Activated CD4-positive, alpha-beta T cell treated with anti-CD3 and anti-CD28 coated beads for 36 hours (primary cell): ENCODE measurements at regions of chr18 and their contacts with region 1.

Region 1: DNA sequence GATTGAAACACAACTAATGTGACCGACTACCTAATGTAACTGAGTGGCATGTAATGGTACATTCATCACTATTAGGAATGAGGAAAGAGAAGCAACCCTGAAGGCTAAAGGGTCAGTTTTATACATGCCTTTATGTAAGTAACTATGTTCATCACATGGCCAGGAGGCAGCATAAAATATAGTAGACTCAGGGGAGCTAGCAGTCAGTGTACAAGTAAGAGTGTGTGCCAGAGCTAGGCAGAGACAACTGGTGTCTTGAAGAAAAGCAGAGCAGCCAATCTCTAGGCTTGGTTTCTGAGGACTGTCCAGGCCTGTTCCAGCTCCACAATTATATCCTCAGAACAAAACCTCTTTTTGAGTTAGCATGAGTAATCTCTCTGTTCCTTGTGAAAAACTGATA is 18.1 kb downstream of the SMAD2 start:
- DNase-seq: peak; percentile 49
- ATAC-seq: peak; percentile 85
- H3K4me3 Mint-ChIP-seq: peak overlapping the region; percentile 44
- H3K27ac Mint-ChIP-seq: peak overlapping the region; percentile 94
- H3K4me1 Mint-ChIP-seq: peaks cover 96% of the 10 kb centered on the region
- H3K27me3 Mint-ChIP-seq: no peaks in the 10 kb centered on the region

Region 2: DNA sequence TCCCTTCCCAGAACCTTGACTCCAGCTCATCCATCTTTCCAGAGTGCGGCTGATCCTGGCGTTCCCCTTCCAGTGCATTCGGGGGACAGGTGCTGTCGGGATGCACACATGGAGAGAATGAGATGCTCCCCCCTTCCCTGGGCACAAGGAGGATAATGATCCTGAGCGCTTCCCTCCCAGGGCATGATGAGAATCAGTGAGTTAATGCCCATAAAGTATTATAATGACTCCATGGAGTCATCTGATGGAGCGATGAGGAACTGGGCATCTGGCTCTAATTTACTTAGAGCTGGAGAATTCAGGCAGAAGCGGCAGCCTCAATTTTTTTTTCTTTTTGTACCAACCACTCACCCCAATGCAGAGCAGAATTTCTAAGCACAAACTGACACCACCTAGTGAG is 581.3 kb before region 1 on chr18:
- CTCF ChIA-PET with region 1: no interaction called
- POLR2A ChIA-PET with region 1: no interaction called
- intact Hi-C with region 1: no loop called
- DNase-seq: no peak
- ATAC-seq: no peak
- H3K4me3 Mint-ChIP-seq: no peak overlapping the region
- H3K27ac Mint-ChIP-seq: no peak overlapping the region
- H3K4me1 Mint-ChIP-seq: no peaks in the 10 kb centered on the region
- H3K27me3 Mint-ChIP-seq: peaks cover 8% of the 10 kb centered on the region

Region 3: GRCh38 chr18:47901624-47902362 is 10.6 kb before region 1 on chr18:
- CTCF ChIA-PET with region 1: interaction called, 3 read pairs
- POLR2A ChIA-PET with region 1: interaction called, 4 read pairs
- intact Hi-C with region 1: loop called in 1 of 2 experiments (anchors 1 kb)
- DNase-seq: no peak
- ATAC-seq: peak; percentile 84
- H3K4me3 Mint-ChIP-seq: peak overlapping the region; percentile 55
- H3K27ac Mint-ChIP-seq: peak overlapping the region; percentile 95
- H3K4me1 Mint-ChIP-seq: peaks cover 88% of the 10 kb centered on the region
- H3K27me3 Mint-ChIP-seq: no peaks in the 10 kb centered on the region

Region 4: DNA sequence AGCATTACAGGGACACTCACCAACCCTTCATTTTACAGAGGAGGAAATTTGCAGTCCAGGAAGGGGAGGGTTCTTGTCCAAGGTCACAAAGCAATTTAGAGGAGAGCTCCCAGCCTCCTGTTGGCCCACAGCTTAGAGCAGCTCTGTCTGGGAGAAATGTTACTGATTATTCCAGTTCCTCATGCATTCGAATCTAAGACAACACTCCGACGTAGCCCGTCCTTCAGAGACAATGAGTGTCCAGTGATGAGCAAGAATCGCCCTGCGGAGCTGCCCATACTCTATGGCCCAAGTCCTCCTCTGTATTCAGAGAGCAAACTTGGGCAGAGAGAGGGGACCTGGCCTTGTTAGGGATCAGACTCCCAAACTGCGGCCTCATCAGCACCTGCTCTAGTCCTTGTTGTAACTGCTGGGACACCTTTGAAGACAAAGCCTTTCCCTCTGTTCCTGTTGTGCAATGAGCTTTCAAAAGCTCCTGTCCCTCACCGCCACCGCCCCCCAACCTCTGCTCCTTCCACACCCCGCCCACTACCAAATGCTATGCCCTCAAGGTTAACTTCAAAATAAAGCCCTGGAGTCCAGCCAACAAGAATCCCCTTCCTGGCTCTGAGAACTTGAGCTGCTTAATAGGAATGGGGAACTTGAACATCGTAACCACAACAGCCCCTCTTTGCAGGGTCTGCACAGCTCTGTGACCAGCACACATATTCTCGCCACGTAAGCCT is 252.9 kb after region 1 on chr18:
- CTCF ChIA-PET with region 1: no interaction called
- POLR2A ChIA-PET with region 1: no interaction called
- intact Hi-C with region 1: no loop called
- DNase-seq: no peak
- ATAC-seq: no peak
- H3K4me3 Mint-ChIP-seq: no peak overlapping the region
- H3K27ac Mint-ChIP-seq: no peak overlapping the region
- H3K4me1 Mint-ChIP-seq: peaks cover 5% of the 10 kb centered on the region
- H3K27me3 Mint-ChIP-seq: peaks cover 3% of the 10 kb centered on the region